Breast epithelium (tissue), 4 donors: ENCODE measurements at regions of chr10 and their contacts with region 1.

Region 1: GRCh38 chr10:31886885-31887284 is 41.7 kb downstream of the ARHGAP12 start:
- DNase-seq: no peak
- H3K4me3 ChIP-seq: no peak overlapping the region
- H3K27ac ChIP-seq: no peak overlapping the region
- H3K4me1 ChIP-seq: no peaks in the 10 kb centered on the region
- H3K27me3 ChIP-seq: no peaks in the 10 kb centered on the region
- CTCF ChIP-seq: no peak
- POLR2A ChIP-seq: no peak

Region 2: DNA sequence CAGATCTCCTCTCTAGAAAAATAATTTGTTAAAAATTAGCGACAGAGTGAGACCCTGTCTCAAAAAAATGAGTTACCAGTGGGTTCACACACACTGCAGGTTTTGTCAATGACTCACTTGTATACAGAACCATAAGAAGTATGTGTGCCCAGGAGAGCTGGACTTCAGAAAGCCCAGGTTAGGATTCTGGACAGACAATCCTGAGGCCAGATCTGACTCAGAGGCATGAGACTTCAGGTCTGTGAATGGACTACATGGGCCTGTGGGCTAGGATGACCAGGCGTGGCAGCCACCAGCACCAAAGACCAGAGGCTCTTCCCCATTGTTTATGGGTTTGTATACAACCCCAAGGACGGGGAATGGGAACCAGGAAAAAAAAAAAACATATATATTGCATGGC is 845.9 kb before region 1 on chr10:
- intact Hi-C with region 1: no loop called
- DNase-seq: no peak
- H3K4me3 ChIP-seq: no peak overlapping the region
- H3K27ac ChIP-seq: no peak overlapping the region
- H3K4me1 ChIP-seq: no peaks in the 10 kb centered on the region
- H3K27me3 ChIP-seq: no peaks in the 10 kb centered on the region
- CTCF ChIP-seq: no peak
- POLR2A ChIP-seq: no peak

Region 3: GRCh38 chr10:31961277-31962074 is 74.6 kb after region 1 on chr10:
- intact Hi-C with region 1: loop called (anchors 2 kb)
- DNase-seq: peak; percentile 53 to 72
- H3K4me3 ChIP-seq: no peak overlapping the region
- H3K27ac ChIP-seq: peak overlapping the region; percentile 6 to 31
- H3K4me1 ChIP-seq: no peaks in the 10 kb centered on the region
- H3K27me3 ChIP-seq: no peaks in the 10 kb centered on the region
- CTCF ChIP-seq: no peak
- POLR2A ChIP-seq: no peak

Region 4: GRCh38 chr10:33237736-33238624 is 1351.1 kb after region 1 on chr10:
- intact Hi-C with region 1: no loop called
- DNase-seq: peak in 1 of 2 donors; percentile 56
- H3K4me3 ChIP-seq: no peak overlapping the region
- H3K27ac ChIP-seq: peak overlapping the region; percentile 10 to 40
- H3K4me1 ChIP-seq: no peaks in the 10 kb centered on the region
- H3K27me3 ChIP-seq: no peaks in the 10 kb centered on the region
- CTCF ChIP-seq: no peak
- POLR2A ChIP-seq: no peak